ENCODE measurements at regions of chr12 and their contacts with region 1.

Region 1: GRCh38 chr12:112108201-112109079 is at the start of gene NAA25:
- DNase-seq: peak; percentile 76 to 93 (median 83)
- ATAC-seq: peak; percentile 82
- H3K4me3 ChIP-seq: peak within 1 kb of the TSS; percentile 95
- H3K4me3 Mint-ChIP-seq: peak within 1 kb of the TSS; percentile 95
- H3K27ac ChIP-seq: peak within 1 kb of the TSS; percentile 85 to 86
- H3K27ac Mint-ChIP-seq: peak within 1 kb of the TSS; percentile 94
- H3K4me1 ChIP-seq: peaks cover 28% of the 10 kb centered on the region
- H3K4me1 Mint-ChIP-seq: peaks cover 50% of the 10 kb centered on the region
- H3K27me3 ChIP-seq: no peaks in the 10 kb centered on the region
- H3K27me3 Mint-ChIP-seq: no peaks in the 10 kb centered on the region
- CTCF ChIP-seq: no peak
- total RNA-seq, gene NAA25: 31.1 to 34.6 TPM

Region 2: DNA sequence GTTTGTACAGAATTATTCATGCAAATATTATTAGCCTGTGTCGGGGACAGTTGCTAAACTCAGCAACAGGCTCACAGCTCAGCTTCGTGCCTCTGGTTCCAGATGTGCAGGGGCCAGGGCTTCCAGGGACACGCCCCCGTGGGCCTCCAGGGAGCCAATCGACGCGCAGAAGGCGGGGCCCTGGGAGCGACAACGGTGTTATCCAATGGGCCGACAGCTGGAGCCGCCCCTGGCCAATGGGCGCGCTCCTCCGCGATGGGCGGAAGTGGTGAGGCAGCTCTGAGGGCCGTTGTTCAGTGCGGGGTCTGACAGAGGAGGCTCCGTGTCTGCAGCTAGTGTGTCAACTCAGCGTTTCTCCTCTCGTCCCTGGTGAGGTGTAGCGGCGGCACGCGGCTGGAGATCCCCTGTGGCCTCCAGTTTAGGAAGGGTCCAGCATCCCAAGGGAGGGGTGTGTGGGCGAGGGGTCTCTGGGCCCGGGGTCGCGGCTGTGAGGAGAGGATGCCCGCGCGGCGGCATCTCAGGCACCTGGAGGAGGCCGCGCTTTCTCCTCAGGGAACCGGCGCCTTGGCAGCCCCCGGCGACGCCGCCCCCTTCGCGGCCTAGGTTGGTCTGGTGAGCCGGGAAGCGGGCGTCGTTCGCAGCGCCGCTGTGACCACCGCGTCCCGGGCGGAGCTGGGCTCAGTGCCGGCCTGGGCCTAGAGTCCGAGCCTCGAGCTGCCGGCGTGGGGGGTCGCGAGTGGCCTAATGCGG is 17.0 kb after region 1 on chr12 and contains the start of gene TRAFD1:
- CTCF ChIA-PET with region 1: interaction called, 9 read pairs
- POLR2A ChIA-PET with region 1: interaction called, 81 read pairs
- intact Hi-C with region 1: loop called (anchors 1 kb)
- DNase-seq: peak; percentile 96 to 99 (median 98)
- ATAC-seq: peak; percentile 98
- H3K4me3 ChIP-seq: peak within 1 kb of the TSS; percentile 73
- H3K4me3 Mint-ChIP-seq: peak within 1 kb of the TSS; percentile 87
- H3K27ac ChIP-seq: peak within 1 kb of the TSS; percentile 68
- H3K27ac Mint-ChIP-seq: peak within 1 kb of the TSS; percentile 76
- H3K4me1 ChIP-seq: peaks cover 45% of the 10 kb centered on the region
- H3K4me1 Mint-ChIP-seq: peaks cover 43% of the 10 kb centered on the region
- H3K27me3 ChIP-seq: no peaks in the 10 kb centered on the region
- H3K27me3 Mint-ChIP-seq: no peaks in the 10 kb centered on the region
- CTCF ChIP-seq: no peak
- total RNA-seq, gene TRAFD1: 19.6 to 20.4 TPM

Region 3: GRCh38 chr12:112130441-112130998 is 22.1 kb after region 1 on chr12:
- CTCF ChIA-PET with region 1: interaction called, 9 read pairs
- POLR2A ChIA-PET with region 1: interaction called, 81 read pairs
- intact Hi-C with region 1: loop called (anchors 1 kb)
- DNase-seq: peak in 3 of 14 experiments; percentile 78 to 84 (median 82)
- ATAC-seq: peak; percentile 65
- H3K4me3 ChIP-seq: peak overlapping the region; percentile 17
- H3K4me3 Mint-ChIP-seq: peak overlapping the region; percentile 70
- H3K27ac ChIP-seq: peak overlapping the region; percentile 57 to 69
- H3K27ac Mint-ChIP-seq: peak overlapping the region; percentile 76
- H3K4me1 ChIP-seq: peaks cover 47% of the 10 kb centered on the region
- H3K4me1 Mint-ChIP-seq: peaks cover 72% of the 10 kb centered on the region
- H3K27me3 ChIP-seq: no peaks in the 10 kb centered on the region
- H3K27me3 Mint-ChIP-seq: no peaks in the 10 kb centered on the region
- CTCF ChIP-seq: no peak

Region 4: GRCh38 chr12:112409064-112409905 is 300.8 kb after region 1 on chr12 and contains the start of gene RPL6:
- CTCF ChIA-PET with region 1: no interaction called
- POLR2A ChIA-PET with region 1: interaction called, 4 read pairs
- intact Hi-C with region 1: loop called in 1 of 2 experiments (anchors 5 kb)
- DNase-seq: peak; percentile 55 to 92 (median 69)
- ATAC-seq: peak; percentile 86
- H3K4me3 ChIP-seq: peak within 1 kb of the TSS; percentile 81
- H3K4me3 Mint-ChIP-seq: peak within 1 kb of the TSS; percentile 100
- H3K27ac ChIP-seq: peak within 1 kb of the TSS; percentile 80 to 89
- H3K27ac Mint-ChIP-seq: peak within 1 kb of the TSS; percentile 99
- H3K4me1 ChIP-seq: peaks cover 23% of the 10 kb centered on the region
- H3K4me1 Mint-ChIP-seq: peaks cover 34% of the 10 kb centered on the region
- H3K27me3 ChIP-seq: no peaks in the 10 kb centered on the region
- H3K27me3 Mint-ChIP-seq: no peaks in the 10 kb centered on the region
- CTCF ChIP-seq: no peak
- total RNA-seq, gene RPL6: 1,794 to 1,807 TPM